B cell (primary cell): ENCODE measurements at regions of chr6 and their contacts with region 1.

Region 1: DNA sequence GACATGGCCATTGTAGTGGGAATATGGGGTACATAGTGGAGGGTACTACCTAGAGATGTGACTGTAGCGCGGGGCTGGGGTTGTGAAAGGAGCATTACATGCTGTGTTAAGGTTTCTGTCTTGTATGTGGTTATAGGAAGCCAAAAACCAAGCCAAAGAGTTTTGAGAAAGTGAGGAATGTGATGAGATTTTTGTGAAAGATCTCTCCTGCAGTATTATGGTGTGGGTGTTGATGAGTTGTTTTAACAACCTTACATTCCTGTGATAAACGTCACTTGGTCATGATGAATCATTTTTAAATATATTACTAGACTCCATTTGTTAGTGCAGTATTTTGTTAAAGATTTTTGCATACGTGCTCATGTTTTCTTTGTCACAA is 48.9 kb downstream of the ZFAND3 start:
- DNase-seq: no peak
- ATAC-seq: no peak
- H3K4me3 ChIP-seq: peak overlapping the region in 1 of 5 experiments; percentile 47
- H3K4me3 Mint-ChIP-seq: peak overlapping the region; percentile 65
- H3K27ac ChIP-seq: peak overlapping the region in 1 of 2 donors; percentile 61
- H3K27ac Mint-ChIP-seq: peak overlapping the region; percentile 60
- H3K4me1 ChIP-seq: peaks cover 22 to 34% of the 10 kb centered on the region in 2 donors
- H3K4me1 Mint-ChIP-seq: peaks cover 63% of the 10 kb centered on the region
- H3K27me3 ChIP-seq: no peaks in the 10 kb centered on the region
- H3K27me3 Mint-ChIP-seq: no peaks in the 10 kb centered on the region
- CTCF ChIP-seq: no peak

Region 2: DNA sequence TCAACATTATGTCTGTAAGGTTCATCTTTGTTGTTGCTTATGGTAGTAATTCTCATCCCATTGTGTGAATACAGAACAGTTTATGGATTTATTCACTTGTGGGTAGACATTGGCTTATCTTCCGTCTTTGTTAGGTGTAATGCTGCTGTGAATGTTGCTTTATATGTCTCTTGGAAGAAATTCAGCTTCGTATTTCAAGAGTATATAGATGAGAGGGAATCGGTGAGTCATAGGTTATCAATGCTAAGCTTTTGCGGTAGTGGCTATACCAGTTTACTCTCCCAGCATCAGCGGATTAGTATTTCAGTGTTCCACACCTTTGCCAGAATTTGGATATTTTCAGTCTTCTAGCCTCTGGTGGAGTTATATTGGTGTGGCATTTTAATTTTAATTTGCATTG is 28.9 kb after region 1 on chr6:
- CTCF ChIA-PET with region 1: no interaction called
- POLR2A ChIA-PET with region 1: interaction called, 10 read pairs
- intact Hi-C with region 1: no loop called
- DNase-seq: no peak
- ATAC-seq: no peak
- H3K4me3 ChIP-seq: no peak overlapping the region
- H3K4me3 Mint-ChIP-seq: no peak overlapping the region
- H3K27ac ChIP-seq: no peak overlapping the region
- H3K27ac Mint-ChIP-seq: no peak overlapping the region
- H3K4me1 ChIP-seq: peaks cover 11 to 12% of the 10 kb centered on the region in 2 donors
- H3K4me1 Mint-ChIP-seq: peaks cover 58% of the 10 kb centered on the region
- H3K27me3 ChIP-seq: no peaks in the 10 kb centered on the region
- H3K27me3 Mint-ChIP-seq: no peaks in the 10 kb centered on the region
- CTCF ChIP-seq: no peak

Region 3: DNA sequence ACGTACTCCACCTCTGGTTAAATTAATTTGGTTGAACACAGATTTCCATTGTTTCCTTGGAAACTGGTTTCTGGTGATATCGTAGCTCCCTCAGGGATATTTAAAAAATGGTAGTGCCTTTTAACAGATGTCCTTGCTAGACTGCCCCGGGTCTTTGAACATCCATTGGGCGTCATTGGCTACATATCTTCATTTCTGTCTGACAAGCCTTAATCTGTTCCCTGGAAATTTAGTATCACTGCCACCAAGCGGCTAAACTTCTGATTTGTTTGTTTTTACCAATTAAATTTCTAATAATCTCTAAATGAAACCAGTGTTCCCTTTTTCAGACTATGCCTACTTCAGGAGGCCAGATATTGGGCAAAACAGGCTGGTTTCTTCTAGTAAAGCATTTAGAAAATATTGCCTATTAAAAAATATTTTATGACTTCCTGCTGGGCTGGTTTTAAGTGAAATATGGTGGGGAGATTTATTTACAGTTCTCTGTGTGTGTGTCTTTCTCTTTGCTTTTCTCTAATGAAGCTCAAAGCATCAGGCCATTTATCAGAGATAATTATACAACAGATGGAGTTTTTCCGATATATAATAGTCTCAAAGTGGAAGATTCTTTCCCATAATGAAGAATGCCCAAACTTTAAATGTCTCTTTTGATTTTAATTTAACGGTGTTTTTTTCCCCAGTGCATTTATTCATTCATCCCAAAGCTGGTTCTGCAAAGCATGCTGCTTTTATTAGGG is 200.6 kb after region 1 on chr6:
- CTCF ChIA-PET with region 1: no interaction called
- POLR2A ChIA-PET with region 1: no interaction called
- intact Hi-C with region 1: no loop called
- DNase-seq: no peak
- ATAC-seq: no peak
- H3K4me3 ChIP-seq: no peak overlapping the region
- H3K4me3 Mint-ChIP-seq: no peak overlapping the region
- H3K27ac ChIP-seq: no peak overlapping the region
- H3K27ac Mint-ChIP-seq: no peak overlapping the region
- H3K4me1 ChIP-seq: peaks cover 10 to 12% of the 10 kb centered on the region in 2 donors
- H3K4me1 Mint-ChIP-seq: peaks cover 49% of the 10 kb centered on the region
- H3K27me3 ChIP-seq: no peaks in the 10 kb centered on the region
- H3K27me3 Mint-ChIP-seq: no peaks in the 10 kb centered on the region
- CTCF ChIP-seq: no peak